Activated B cell treated with CpG ODN at 0.5 μM for 24 hours (primary cell): ENCODE measurements at regions of chr11 and their contacts with region 1.

Region 1: DNA sequence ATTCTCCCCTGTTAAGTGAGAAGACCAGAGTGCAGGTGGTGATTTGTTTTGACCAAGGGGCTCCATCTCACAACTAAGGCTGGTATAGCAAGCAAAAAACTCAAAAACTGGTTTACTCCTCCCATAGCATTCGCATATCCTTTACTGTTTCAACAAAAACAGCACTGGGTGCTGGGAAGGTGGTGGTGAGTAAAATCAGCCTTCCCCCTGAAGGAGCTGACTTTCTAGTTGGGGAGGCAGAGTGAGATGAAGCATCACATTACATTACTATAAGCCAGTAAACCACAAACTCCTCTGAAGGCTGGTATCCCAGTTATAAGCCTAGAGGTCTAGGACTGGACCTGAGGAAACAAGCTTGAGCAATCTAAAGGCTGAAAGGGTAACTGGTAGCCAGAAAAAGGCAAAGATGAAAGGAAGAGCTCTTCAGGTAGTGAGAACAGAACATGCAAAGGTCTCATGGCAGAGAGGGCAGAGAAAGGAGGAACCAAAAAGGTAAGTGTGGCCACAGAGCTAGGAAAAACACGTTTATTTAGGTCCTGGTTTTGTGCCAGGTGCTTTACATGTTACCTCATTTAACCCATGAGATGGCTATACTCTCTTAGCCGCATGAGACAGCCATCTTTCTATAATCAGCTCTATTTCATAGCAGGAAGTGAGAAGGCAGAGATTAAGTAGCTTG is 22.3 kb downstream of the TMEM123 start:
- DNase-seq: no peak
- ATAC-seq: peak; percentile 84
- H3K4me3 Mint-ChIP-seq: peak overlapping the region; percentile 39
- H3K27ac Mint-ChIP-seq: peak overlapping the region; percentile 72
- H3K4me1 Mint-ChIP-seq: peaks cover 56% of the 10 kb centered on the region
- H3K27me3 Mint-ChIP-seq: no peaks in the 10 kb centered on the region
- CTCF ChIP-seq: no peak

Region 2: DNA sequence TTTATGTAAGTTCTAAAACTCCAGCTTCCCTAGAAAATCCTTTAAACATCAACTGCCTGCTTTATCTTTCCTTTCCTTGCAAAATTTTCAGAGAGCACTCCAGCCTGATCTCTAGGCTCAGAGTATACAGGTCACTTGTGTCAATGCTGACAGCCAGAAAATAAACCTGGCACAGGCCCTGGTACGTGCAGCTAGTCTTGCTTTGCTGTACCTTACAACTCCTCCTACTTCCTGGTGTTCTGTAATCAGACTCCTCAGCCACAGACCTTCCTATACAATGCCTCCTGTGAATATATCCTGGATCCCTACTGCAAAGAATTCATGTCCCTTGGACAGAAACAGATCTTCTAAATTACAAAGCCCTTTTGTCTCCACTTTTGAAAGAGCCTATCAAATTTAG is 46.5 kb after region 1 on chr11:
- CTCF ChIA-PET with region 1: no interaction called
- POLR2A ChIA-PET with region 1: interaction called, 4 read pairs
- intact Hi-C with region 1: loop called (anchors 1 kb)
- DNase-seq: no peak
- ATAC-seq: no peak
- H3K4me3 Mint-ChIP-seq: peak overlapping the region; percentile 17
- H3K27ac Mint-ChIP-seq: peak overlapping the region; percentile 65
- H3K4me1 Mint-ChIP-seq: peaks cover 47% of the 10 kb centered on the region
- H3K27me3 Mint-ChIP-seq: no peaks in the 10 kb centered on the region
- CTCF ChIP-seq: no peak